HEK293 (cell line): ENCODE measurements at regions of chr6 and their contacts with region 1.

Region 1: GRCh38 chr6:160667639-160668481 is 3.8 kb upstream of the LPA start:
- H3K4me3 ChIP-seq: no peak overlapping the region
- H3K27ac ChIP-seq: no peak overlapping the region
- H3K4me1 ChIP-seq: no peaks in the 10 kb centered on the region
- CTCF ChIP-seq: no peak

Region 2: DNA sequence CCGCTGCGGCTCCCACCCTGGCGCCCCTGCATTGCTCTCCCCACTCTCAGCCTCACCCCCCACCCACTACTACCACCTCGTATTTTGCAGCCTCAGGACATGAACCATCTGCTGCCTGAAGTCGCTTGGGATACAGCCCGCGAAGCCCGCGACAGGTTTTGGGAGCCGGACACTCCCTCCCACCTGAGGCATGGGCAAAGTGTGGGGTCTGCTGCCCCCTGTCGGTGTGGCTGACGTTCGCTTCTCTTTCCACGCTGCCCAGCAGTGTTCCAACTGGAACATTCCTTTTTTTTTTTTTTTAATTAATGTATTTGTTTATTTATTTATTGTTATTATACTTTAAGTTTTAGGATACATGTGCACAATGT is 11.5 kb after region 1 on chr6:
- CTCF ChIA-PET with region 1: interaction called, 11 read pairs
- POLR2A ChIA-PET with region 1: no interaction called
- H3K4me3 ChIP-seq: peak overlapping the region; percentile 38
- H3K27ac ChIP-seq: no peak overlapping the region
- H3K4me1 ChIP-seq: no peaks in the 10 kb centered on the region
- CTCF ChIP-seq: no peak